T-cell (primary cell): ENCODE measurements at regions of chr12 and their contacts with region 1.

Region 1: GRCh38 chr12:124917135-124917840 is 2.8 kb upstream of the UBC start:
- DNase-seq: peak; percentile 74 to 97 (median 92)
- ATAC-seq: peak; percentile 75 to 84 (median 80)
- H3K4me3 ChIP-seq: peak overlapping the region; percentile 44 to 84
- H3K4me3 Mint-ChIP-seq: peak overlapping the region; percentile 99 to 100 (median 100)
- H3K27ac ChIP-seq: peak overlapping the region; percentile 91
- H3K27ac Mint-ChIP-seq: peak overlapping the region; percentile 98 to 99
- H3K4me1 ChIP-seq: peaks cover 57 to 80% of the 10 kb centered on the region in 2 experiments
- H3K4me1 Mint-ChIP-seq: peaks cover 87 to 96% (median 89%) of the 10 kb centered on the region in 3 donors
- H3K27me3 ChIP-seq: no peaks in the 10 kb centered on the region
- H3K27me3 Mint-ChIP-seq: peaks cover 0 to 8% of the 10 kb centered on the region in 2 donors

Region 2: DNA sequence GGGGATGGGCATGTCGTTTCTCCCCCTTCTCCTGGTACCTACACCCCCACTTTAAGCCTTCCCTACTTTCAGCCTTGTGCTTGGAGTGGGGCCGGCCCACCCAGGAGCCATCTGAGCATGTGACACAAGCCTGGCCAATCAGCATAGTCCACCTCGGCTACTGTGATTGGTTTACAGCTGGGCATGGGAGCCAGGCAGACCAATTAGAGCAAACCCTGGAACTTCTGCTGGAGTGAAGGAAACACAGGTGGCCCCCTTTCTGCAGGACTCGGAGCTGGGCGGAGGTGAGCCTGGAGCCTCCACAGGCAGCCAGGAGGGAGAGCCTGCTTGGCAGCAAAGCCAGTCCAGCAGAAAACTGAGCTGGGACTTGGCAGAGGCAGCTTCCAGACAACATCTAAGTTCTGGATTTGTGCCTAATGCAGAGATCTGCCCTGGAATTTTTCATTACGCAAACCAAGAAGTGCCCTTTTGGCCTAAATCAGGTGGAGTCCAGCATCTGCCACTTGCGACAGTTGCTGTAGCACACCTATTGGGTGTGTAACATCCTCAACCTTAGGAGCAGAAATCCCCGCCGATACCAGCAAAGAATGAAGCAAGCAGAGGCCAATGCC is 113.2 kb before region 1 on chr12:
- CTCF ChIA-PET with region 1: no interaction called
- POLR2A ChIA-PET with region 1: no interaction called
- DNase-seq: no peak
- ATAC-seq: no peak
- H3K4me3 ChIP-seq: no peak overlapping the region
- H3K4me3 Mint-ChIP-seq: no peak overlapping the region
- H3K27ac ChIP-seq: no peak overlapping the region
- H3K27ac Mint-ChIP-seq: no peak overlapping the region
- H3K4me1 ChIP-seq: no peaks in the 10 kb centered on the region
- H3K4me1 Mint-ChIP-seq: no peaks in the 10 kb centered on the region
- H3K27me3 ChIP-seq: no peaks in the 10 kb centered on the region
- H3K27me3 Mint-ChIP-seq: no peaks in the 10 kb centered on the region

Region 3: DNA sequence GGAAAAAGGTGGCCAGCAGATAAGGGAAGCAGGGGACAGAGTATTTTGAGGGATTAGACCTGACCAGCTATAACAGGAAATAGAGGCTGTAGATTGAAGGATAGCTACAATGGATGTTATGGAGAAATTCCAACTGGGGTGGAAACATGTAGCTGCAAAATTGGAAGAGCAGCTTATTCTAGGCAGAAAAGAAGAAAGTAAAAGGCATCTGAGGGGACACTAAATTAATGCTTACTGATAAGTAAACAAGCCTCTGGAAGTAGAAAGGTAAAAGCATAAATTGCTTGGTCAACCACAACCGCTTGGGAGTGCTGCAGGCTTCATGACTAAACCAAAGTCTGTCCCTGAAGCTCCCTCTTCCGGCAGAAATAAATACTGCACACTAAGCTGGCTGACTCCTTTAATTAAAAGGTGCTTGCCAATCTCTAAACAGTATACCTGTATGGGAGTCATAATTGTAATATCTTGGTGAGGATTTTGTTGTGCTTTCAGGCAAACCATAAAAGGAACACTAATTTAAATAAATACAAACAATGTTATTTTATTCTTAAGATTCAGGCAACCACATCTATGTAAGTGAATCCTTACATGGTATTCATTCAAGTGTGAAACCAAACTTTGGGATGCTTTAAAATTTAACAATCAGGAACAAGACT is 10.6 kb before region 1 on chr12:
- CTCF ChIA-PET with region 1: interaction called in 1 of 2 experiments, 50 read pairs
- POLR2A ChIA-PET with region 1: interaction called, 8 to 23 read pairs
- DNase-seq: peak; percentile 64 to 96 (median 86)
- ATAC-seq: peak; percentile 73 to 95 (median 90)
- H3K4me3 ChIP-seq: no peak overlapping the region
- H3K4me3 Mint-ChIP-seq: no peak overlapping the region
- H3K27ac ChIP-seq: peak overlapping the region; percentile 42
- H3K27ac Mint-ChIP-seq: peak overlapping the region; percentile 70 to 71
- H3K4me1 ChIP-seq: peaks cover 12 to 16% of the 10 kb centered on the region in 2 experiments
- H3K4me1 Mint-ChIP-seq: peaks cover 27 to 30% (median 29%) of the 10 kb centered on the region in 3 donors
- H3K27me3 ChIP-seq: no peaks in the 10 kb centered on the region
- H3K27me3 Mint-ChIP-seq: no peaks in the 10 kb centered on the region

Region 4: DNA sequence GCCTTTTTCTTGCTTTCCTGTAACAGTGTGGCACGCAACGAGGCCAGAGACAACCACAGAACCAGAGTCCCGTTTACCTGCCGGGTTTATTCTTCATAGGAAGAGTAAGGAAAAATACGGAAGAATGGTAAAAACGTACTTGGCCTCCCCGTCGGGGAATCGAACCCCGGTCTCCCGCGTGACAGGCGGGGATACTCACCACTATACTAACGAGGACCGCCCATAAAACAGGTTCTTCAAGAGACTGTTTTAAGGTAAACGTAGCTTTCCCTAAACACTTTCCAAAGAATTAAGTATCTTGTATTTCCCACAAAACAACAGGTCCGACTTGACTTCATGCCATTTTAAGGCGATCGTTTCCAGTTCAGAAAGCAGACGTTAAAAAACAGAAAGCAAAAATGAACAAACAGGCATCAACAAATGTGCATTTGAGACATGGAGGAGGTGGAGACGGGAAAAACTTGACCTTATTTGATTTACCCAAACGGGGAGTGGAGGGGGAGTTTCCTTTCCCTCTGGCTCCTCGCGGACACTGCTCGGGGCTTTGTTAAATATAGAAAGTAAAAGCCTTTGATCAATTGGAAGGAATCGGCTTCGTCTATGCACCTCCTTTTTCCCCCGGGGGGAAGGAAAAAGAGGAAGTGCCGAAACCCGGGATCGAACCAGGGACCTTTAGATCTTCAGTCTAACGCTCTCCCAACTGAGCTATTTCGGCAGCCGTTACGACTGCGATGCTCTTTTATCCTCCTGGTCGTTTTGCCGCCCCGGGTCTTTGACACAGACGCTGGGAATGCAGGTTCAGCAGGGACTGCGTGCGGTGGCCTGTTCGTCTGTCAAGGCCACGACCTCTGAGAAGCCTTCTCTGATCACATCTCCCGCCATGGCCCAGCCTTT is 10.2 kb after region 1 on chr12:
- CTCF ChIA-PET with region 1: interaction called, 8 to 14 read pairs
- POLR2A ChIA-PET with region 1: interaction called in 1 of 2 experiments, 6 read pairs
- DNase-seq: peak; percentile 76 to 93 (median 90)
- ATAC-seq: peak; percentile 83 to 89 (median 84)
- H3K4me3 ChIP-seq: peak overlapping the region; percentile 58 to 79
- H3K4me3 Mint-ChIP-seq: peak overlapping the region; percentile 84 to 89 (median 86)
- H3K27ac ChIP-seq: peak overlapping the region; percentile 72
- H3K27ac Mint-ChIP-seq: peak overlapping the region; percentile 97 to 99
- H3K4me1 ChIP-seq: peaks cover 11 to 34% of the 10 kb centered on the region in 2 experiments
- H3K4me1 Mint-ChIP-seq: peaks cover 29 to 34% (median 31%) of the 10 kb centered on the region in 3 donors
- H3K27me3 ChIP-seq: no peaks in the 10 kb centered on the region
- H3K27me3 Mint-ChIP-seq: peaks cover 3 to 8% of the 10 kb centered on the region in 2 donors

Region 5: GRCh38 chr12:125228519-125229260 is 311.4 kb after region 1 on chr12:
- CTCF ChIA-PET with region 1: no interaction called
- POLR2A ChIA-PET with region 1: no interaction called
- DNase-seq: no peak
- ATAC-seq: no peak
- H3K4me3 ChIP-seq: no peak overlapping the region
- H3K4me3 Mint-ChIP-seq: no peak overlapping the region
- H3K27ac ChIP-seq: no peak overlapping the region
- H3K27ac Mint-ChIP-seq: no peak overlapping the region
- H3K4me1 ChIP-seq: no peaks in the 10 kb centered on the region
- H3K4me1 Mint-ChIP-seq: no peaks in the 10 kb centered on the region
- H3K27me3 ChIP-seq: peaks cover 0 to 18% of the 10 kb centered on the region in 2 experiments
- H3K27me3 Mint-ChIP-seq: peaks cover 7 to 8% of the 10 kb centered on the region in 2 donors